CD4-positive, alpha-beta T cell (primary cell): ENCODE measurements at regions of chr11 and their contacts with region 1.

Region 1: DNA sequence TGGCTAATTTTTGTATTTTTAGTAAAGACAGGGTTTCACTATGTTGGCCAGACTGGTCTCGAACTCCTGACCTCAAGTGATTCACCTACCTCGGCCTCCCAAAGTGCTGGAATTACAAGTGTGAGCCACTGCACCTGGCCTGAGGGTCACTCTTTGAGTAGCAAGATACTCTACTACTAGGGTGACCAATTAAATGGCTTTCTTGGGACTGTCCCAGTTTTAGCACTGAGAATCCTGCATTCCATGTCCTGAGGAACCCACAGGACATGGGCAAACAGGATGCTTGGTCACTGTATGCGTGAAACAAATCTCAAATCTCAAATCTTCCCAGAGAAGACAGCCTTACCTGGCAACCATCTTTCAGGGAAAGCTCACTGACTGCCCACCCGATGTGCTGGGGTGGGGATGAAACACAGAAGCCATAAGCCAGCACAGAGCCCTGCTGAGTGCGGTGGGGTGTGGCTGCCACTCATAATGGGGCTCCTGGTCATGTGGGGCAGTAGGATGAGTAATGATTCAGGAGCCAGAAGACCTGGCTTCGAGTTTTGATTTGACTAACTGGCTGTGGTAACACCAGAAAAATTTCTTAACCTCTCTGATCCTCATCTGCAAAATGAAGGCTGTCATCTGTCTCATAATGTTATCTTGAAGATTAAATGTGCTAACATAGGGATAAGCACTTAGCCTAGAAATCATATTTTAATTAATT is 11.5 kb downstream of the CLMP start:
- DNase-seq: no peak
- ATAC-seq: no peak
- H3K4me3 ChIP-seq: no peak overlapping the region
- H3K4me3 Mint-ChIP-seq: no peak overlapping the region
- H3K27ac ChIP-seq: no peak overlapping the region
- H3K27ac Mint-ChIP-seq: no peak overlapping the region
- H3K4me1 ChIP-seq: no peaks in the 10 kb centered on the region
- H3K4me1 Mint-ChIP-seq: no peaks in the 10 kb centered on the region
- H3K27me3 ChIP-seq: peaks cover 12 to 24% of the 10 kb centered on the region in 2 experiments
- H3K27me3 Mint-ChIP-seq: peaks cover 46% of the 10 kb centered on the region
- CTCF ChIP-seq: no peak

Region 2: DNA sequence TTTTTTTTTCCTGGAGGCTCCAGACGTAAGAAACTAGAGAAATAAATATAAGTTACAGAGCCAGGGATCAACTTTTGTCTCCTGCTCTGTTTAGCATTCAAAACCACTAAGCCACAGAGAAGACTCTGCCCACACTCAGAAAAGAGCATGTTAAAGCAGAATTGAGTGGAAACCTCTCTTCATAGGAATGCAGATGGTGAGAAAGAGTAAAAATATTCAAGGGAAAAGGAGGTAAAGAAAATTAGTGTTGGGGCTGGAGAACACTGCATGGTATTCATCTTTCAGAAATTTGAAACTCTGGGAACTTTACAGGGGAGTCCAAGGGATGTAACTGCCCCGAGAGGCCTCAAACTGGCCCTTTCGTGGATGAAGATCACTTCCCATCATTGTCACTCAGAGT is 53.6 kb before region 1 on chr11:
- CTCF ChIA-PET with region 1: no interaction called
- POLR2A ChIA-PET with region 1: no interaction called
- intact Hi-C with region 1: loop called in 1 of 2 experiments (anchors 5 kb)
- DNase-seq: no peak
- ATAC-seq: no peak
- H3K4me3 ChIP-seq: no peak overlapping the region
- H3K4me3 Mint-ChIP-seq: no peak overlapping the region
- H3K27ac ChIP-seq: no peak overlapping the region
- H3K27ac Mint-ChIP-seq: no peak overlapping the region
- H3K4me1 ChIP-seq: no peaks in the 10 kb centered on the region
- H3K4me1 Mint-ChIP-seq: no peaks in the 10 kb centered on the region
- H3K27me3 ChIP-seq: no peaks in the 10 kb centered on the region
- H3K27me3 Mint-ChIP-seq: no peaks in the 10 kb centered on the region
- CTCF ChIP-seq: no peak

Region 3: GRCh38 chr11:123235117-123235655 is 51.6 kb after region 1 on chr11:
- CTCF ChIA-PET with region 1: no interaction called
- POLR2A ChIA-PET with region 1: no interaction called
- intact Hi-C with region 1: no loop called
- DNase-seq: peak; percentile 7 to 70 (median 32)
- ATAC-seq: peak; percentile 51
- H3K4me3 ChIP-seq: no peak overlapping the region
- H3K4me3 Mint-ChIP-seq: no peak overlapping the region
- H3K27ac ChIP-seq: no peak overlapping the region
- H3K27ac Mint-ChIP-seq: no peak overlapping the region
- H3K4me1 ChIP-seq: peaks cover 10% of the 10 kb centered on the region
- H3K4me1 Mint-ChIP-seq: peaks cover 17% of the 10 kb centered on the region
- H3K27me3 ChIP-seq: no peaks in the 10 kb centered on the region
- H3K27me3 Mint-ChIP-seq: no peaks in the 10 kb centered on the region
- CTCF ChIP-seq: no peak

Region 4: GRCh38 chr11:123351375-123351774 is 167.8 kb after region 1 on chr11:
- CTCF ChIA-PET with region 1: no interaction called
- POLR2A ChIA-PET with region 1: no interaction called
- intact Hi-C with region 1: no loop called
- DNase-seq: no peak
- ATAC-seq: no peak
- H3K4me3 ChIP-seq: no peak overlapping the region
- H3K4me3 Mint-ChIP-seq: no peak overlapping the region
- H3K27ac ChIP-seq: no peak overlapping the region
- H3K27ac Mint-ChIP-seq: no peak overlapping the region
- H3K4me1 ChIP-seq: no peaks in the 10 kb centered on the region
- H3K4me1 Mint-ChIP-seq: no peaks in the 10 kb centered on the region
- H3K27me3 ChIP-seq: no peaks in the 10 kb centered on the region
- H3K27me3 Mint-ChIP-seq: peaks cover under 1% of the 10 kb centered on the region
- CTCF ChIP-seq: no peak